ENCODE measurements at regions of chr3 and their contacts with region 1.

Region 1: DNA sequence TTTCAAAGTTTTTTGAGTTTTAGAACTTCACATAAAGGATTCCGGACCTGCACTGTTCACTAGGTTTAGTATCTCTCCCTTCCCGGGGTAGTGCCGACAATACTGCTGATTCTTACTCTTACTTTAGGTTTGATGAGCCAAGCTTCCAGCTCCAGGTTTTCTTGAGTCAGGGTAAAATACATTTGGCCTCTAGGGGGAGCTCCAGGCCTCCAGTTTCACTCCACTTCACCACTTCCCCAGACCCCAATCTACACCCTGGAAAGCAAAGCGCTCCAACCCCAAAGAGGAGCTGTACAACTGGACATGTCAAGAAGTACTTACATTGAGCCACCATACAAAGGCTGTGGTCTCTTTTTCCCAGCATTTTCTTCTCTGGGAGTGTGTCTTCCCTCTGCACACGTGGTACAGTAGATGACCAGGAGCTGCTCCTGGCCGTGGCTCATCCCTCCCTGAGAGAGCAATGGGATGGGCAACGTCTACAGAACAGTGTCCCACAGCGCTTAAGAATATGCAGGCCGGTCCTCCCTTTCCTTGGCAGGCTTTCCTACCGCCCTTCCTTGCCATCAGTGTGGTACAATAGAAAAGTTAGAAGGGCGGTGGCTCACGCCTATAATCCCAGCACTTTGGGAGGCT is 93.9 kb upstream of the CCDC80 start:
- H3K4me3 ChIP-seq: no peak overlapping the region
- H3K27ac ChIP-seq: no peak overlapping the region
- H3K4me1 ChIP-seq: no peaks in the 10 kb centered on the region
- CTCF ChIP-seq: peak; percentile 31; the same call in 1 of the 2 replicates

Region 2: DNA sequence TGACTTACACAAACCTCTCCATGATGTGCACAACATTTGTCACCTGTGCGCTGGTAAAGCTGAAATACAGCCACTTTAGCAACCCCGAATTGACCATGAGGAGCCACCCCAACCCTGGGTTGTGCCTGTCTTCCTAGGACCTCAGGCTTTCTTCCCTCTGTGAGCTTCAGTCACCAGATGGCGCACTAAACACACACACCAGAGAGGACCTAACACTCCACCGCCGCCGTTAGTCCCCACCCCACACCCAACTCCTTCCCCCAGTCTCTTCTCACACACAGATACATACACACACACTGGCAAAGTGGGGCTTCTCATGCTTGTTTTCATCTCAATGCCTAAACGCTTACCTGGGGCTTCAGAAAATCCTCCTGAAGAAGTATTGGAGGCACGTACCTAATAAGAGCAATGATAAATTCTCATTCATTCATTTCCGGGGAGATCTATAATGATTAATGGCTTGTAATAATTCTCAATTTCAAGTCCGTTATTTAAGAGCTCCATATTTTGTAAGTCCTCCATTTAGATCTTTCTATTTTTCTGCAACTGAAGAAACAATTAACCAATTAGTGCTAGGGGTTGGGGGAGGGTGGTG is 91.8 kb before region 1 on chr3:
- CTCF ChIA-PET with region 1: interaction called, 24 read pairs
- POLR2A ChIA-PET with region 1: interaction called, 3 read pairs
- H3K4me3 ChIP-seq: no peak overlapping the region
- H3K27ac ChIP-seq: no peak overlapping the region
- H3K4me1 ChIP-seq: no peaks in the 10 kb centered on the region
- CTCF ChIP-seq: peak; percentile 88

Region 3: GRCh38 chr3:112699436-112699978 is 35.3 kb before region 1 on chr3:
- CTCF ChIA-PET with region 1: no interaction called
- POLR2A ChIA-PET with region 1: no interaction called
- H3K4me3 ChIP-seq: no peak overlapping the region
- H3K27ac ChIP-seq: no peak overlapping the region
- H3K4me1 ChIP-seq: no peaks in the 10 kb centered on the region
- CTCF ChIP-seq: no peak

Region 4: GRCh38 chr3:112709911-112710310 is 24.9 kb before region 1 on chr3:
- CTCF ChIA-PET with region 1: interaction called, 10 read pairs
- POLR2A ChIA-PET with region 1: no interaction called
- H3K4me3 ChIP-seq: no peak overlapping the region
- H3K27ac ChIP-seq: no peak overlapping the region
- H3K4me1 ChIP-seq: no peaks in the 10 kb centered on the region
- CTCF ChIP-seq: no peak

Region 5: GRCh38 chr3:112751061-112751460 is 16.2 kb after region 1 on chr3:
- CTCF ChIA-PET with region 1: interaction called, 12 read pairs
- POLR2A ChIA-PET with region 1: no interaction called
- H3K4me3 ChIP-seq: no peak overlapping the region
- H3K27ac ChIP-seq: no peak overlapping the region
- H3K4me1 ChIP-seq: no peaks in the 10 kb centered on the region; the same call in 1 of the 2 replicates
- CTCF ChIP-seq: no peak

Region 6: GRCh38 chr3:112814266-112814665 is 79.4 kb after region 1 on chr3:
- CTCF ChIA-PET with region 1: interaction called, 18 read pairs
- POLR2A ChIA-PET with region 1: no interaction called
- H3K4me3 ChIP-seq: no peak overlapping the region
- H3K27ac ChIP-seq: no peak overlapping the region
- H3K4me1 ChIP-seq: no peaks in the 10 kb centered on the region
- CTCF ChIP-seq: no peak; the same call in 1 of the 2 replicates

Region 7: DNA sequence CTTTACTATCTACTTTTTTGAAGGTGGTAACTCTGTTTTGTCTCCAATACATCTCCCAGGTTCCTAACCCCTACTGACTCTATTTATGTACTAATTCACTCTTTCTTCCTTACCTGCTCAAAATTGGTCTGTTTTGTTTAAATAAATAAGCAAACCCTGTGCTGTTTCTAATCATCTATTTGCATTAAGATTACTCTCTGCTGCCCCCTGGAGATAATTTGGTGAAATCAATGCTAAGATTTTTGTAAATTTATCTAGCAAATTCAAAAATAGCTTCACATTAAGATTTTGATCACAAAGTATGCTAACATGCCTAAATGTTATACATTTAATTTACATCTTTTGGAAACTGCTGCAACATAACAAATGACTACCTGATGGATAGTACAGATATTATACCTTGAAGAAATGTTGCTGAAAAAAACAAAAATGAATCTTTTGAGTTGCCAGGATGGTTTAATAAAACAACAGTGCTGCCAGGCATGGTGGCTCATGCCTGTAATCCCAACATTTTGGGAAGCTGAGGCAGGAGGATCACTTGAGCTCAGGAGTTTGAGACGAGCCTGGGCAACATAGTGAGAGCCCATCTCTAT is 244.5 kb after region 1 on chr3:
- CTCF ChIA-PET with region 1: interaction called, 21 read pairs
- POLR2A ChIA-PET with region 1: no interaction called
- H3K4me3 ChIP-seq: no peak overlapping the region
- H3K27ac ChIP-seq: no peak overlapping the region
- H3K4me1 ChIP-seq: no peaks in the 10 kb centered on the region; the same call in 1 of the 2 replicates
- CTCF ChIP-seq: no peak; the same call in 1 of the 2 replicates

Measured in HEK293 (cell line).